Ascending aorta (tissue), 2 donors: ENCODE measurements at regions of chr10 and their contacts with region 1.

Region 1: GRCh38 chr10:45594276-45595106 is 78.1 kb downstream of the ZFAND4 start:
- DNase-seq: peak; percentile 38 to 96
- H3K4me3 ChIP-seq: peak overlapping the region; percentile 82 to 92
- H3K27ac ChIP-seq: peak overlapping the region; percentile 36 to 71
- H3K4me1 ChIP-seq: peaks cover 0 to 16% of the 10 kb centered on the region in 2 donors
- H3K27me3 ChIP-seq: no peaks in the 10 kb centered on the region
- CTCF ChIP-seq: peak in 1 of 3 experiments; percentile 19

Region 2: GRCh38 chr10:45008524-45009161 is 585.8 kb before region 1 on chr10:
- intact Hi-C with region 1: loop called (anchors 10 kb)
- DNase-seq: no peak
- H3K4me3 ChIP-seq: no peak overlapping the region
- H3K27ac ChIP-seq: no peak overlapping the region
- H3K4me1 ChIP-seq: peaks cover 0 to 3% of the 10 kb centered on the region in 2 donors
- H3K27me3 ChIP-seq: no peaks in the 10 kb centered on the region
- CTCF ChIP-seq: peak; percentile 57 to 79 (median 72)

Region 3: GRCh38 chr10:45235798-45236231 is 358.7 kb before region 1 on chr10:
- intact Hi-C with region 1: loop called (anchors 2 kb)
- DNase-seq: no peak
- H3K4me3 ChIP-seq: no peak overlapping the region
- H3K27ac ChIP-seq: no peak overlapping the region
- H3K4me1 ChIP-seq: peaks cover 0 to 5% of the 10 kb centered on the region in 2 donors
- H3K27me3 ChIP-seq: no peaks in the 10 kb centered on the region
- CTCF ChIP-seq: no peak